ENCODE measurements at regions of chr1 and their contacts with region 1.

Region 1: GRCh38 chr1:185317034-185317885 is at the start of gene IVNS1ABP:
- DNase-seq: peak; percentile 95 to 98 (median 96)
- ATAC-seq: peak; percentile 90 to 94 (median 92)
- H3K4me3 ChIP-seq: peak within 1 kb of the TSS; percentile 66 to 99 (median 90)
- H3K27ac ChIP-seq: peak within 1 kb of the TSS; percentile 87 to 99 (median 96)
- H3K4me1 ChIP-seq: peaks cover 0 to 51% (median 32%) of the 10 kb centered on the region in 12 donors
- H3K27me3 ChIP-seq: no peaks in the 10 kb centered on the region
- CTCF ChIP-seq: peak in 3 of 12 donors; percentile 10 to 37 (median 12)
- POLR2A ChIP-seq: peak; percentile 87 to 97
- total RNA-seq, gene IVNS1ABP: 24.7 to 95.2 (median 60.6) TPM

Region 2: GRCh38 chr1:184590163-184590750 is 727.0 kb before region 1 on chr1:
- intact Hi-C with region 1: no loop called
- DNase-seq: no peak
- ATAC-seq: no peak
- H3K4me3 ChIP-seq: no peak overlapping the region
- H3K27ac ChIP-seq: no peak overlapping the region
- H3K4me1 ChIP-seq: peaks cover 0 to 16% (median 1%) of the 10 kb centered on the region in 12 donors
- H3K27me3 ChIP-seq: no peaks in the 10 kb centered on the region
- CTCF ChIP-seq: no peak
- POLR2A ChIP-seq: no peak

Region 3: GRCh38 chr1:185249563-185249962 is 67.7 kb before region 1 on chr1:
- intact Hi-C with region 1: loop called in 1 of 10 experiments (anchors 5 kb)
- DNase-seq: no peak
- ATAC-seq: peak; percentile 50 to 83 (median 72)
- H3K4me3 ChIP-seq: no peak overlapping the region
- H3K27ac ChIP-seq: peak overlapping the region in 4 of 12 donors; percentile 20 to 56 (median 32)
- H3K4me1 ChIP-seq: peaks cover 0 to 12% (median 6%) of the 10 kb centered on the region in 12 donors
- H3K27me3 ChIP-seq: no peaks in the 10 kb centered on the region
- CTCF ChIP-seq: no peak
- POLR2A ChIP-seq: no peak

Region 4: GRCh38 chr1:185652348-185652747 is 335.1 kb after region 1 on chr1:
- intact Hi-C with region 1: loop called in 1 of 10 experiments (anchors 5 kb)
- DNase-seq: no peak
- ATAC-seq: no peak
- H3K4me3 ChIP-seq: no peak overlapping the region
- H3K27ac ChIP-seq: no peak overlapping the region
- H3K4me1 ChIP-seq: peaks cover 0 to 16% (median under 1%) of the 10 kb centered on the region in 12 donors
- H3K27me3 ChIP-seq: no peaks in the 10 kb centered on the region
- CTCF ChIP-seq: no peak
- POLR2A ChIP-seq: no peak